ENCODE measurements at regions of chr3 and their contacts with region 1.

Region 1: GRCh38 chr3:32502118-32502945 is at the start of gene CMTM6:
- DNase-seq: peak; percentile 81
- H3K4me3 Mint-ChIP-seq: peak within 1 kb of the TSS; percentile 97
- H3K27ac Mint-ChIP-seq: peak within 1 kb of the TSS; percentile 89
- H3K4me1 Mint-ChIP-seq: peaks cover 27% of the 10 kb centered on the region
- H3K27me3 Mint-ChIP-seq: no peaks in the 10 kb centered on the region
- total RNA-seq, gene CMTM6: 43.7 to 44.3 TPM

Region 2: GRCh38 chr3:32302601-32303398 is 199.5 kb before region 1 on chr3:
- CTCF ChIA-PET with region 1: no interaction called
- intact Hi-C with region 1: loop called (anchors 1 kb)
- DNase-seq: no peak
- H3K4me3 Mint-ChIP-seq: peak overlapping the region; percentile 44
- H3K27ac Mint-ChIP-seq: peak overlapping the region; percentile 88
- H3K4me1 Mint-ChIP-seq: peaks cover 55% of the 10 kb centered on the region
- H3K27me3 Mint-ChIP-seq: no peaks in the 10 kb centered on the region

Measured in activated naive CD4-positive, alpha-beta T cell treated with anti-CD3 and anti-CD28 coated beads for 36 hours (primary cell).